Activated CD4-positive, alpha-beta memory T cell treated with anti-CD3 and anti-CD28 coated beads for 36 hours (primary cell): ENCODE measurements at regions of chr1 and their contacts with region 1.

Region 1: DNA sequence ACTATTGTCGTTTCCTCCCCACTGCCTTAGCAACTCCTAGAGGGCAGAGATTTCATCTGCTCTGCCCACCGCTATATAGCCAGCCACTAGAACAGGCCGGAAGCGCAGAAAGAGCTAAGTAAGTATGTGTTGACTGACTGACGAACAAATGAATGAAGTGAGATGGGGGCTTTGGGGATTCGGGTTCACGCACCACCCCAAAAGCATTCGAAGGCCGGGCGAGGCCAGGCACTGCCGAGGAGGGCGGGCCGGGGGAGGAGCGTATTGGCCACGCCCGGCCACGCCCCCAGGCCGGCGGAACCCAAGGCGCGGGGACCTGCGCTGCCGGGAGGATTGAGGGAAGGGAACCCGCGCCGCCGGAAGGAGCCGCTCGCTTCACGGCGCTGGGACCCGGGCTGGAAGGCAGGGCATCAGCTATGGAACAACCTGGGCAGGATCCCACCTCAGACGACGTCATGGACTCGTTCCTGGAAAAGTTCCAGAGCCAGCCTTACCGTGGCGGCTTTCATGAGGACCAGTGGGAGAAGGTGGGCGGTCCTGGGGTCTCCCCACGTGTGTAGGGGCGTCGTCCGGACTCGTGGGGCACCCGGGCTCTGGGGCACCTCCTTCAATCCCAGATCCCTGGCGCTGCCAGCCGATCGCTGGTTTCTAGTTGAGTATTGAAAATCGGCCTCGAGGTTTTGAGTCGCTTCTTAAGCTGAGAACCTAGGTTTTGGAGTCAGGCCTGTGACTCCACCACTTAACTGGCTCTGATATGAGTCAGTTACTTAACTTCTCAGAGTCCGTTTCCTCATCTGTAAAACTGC is at the start of gene TTC4:
- DNase-seq: peak; percentile 87
- H3K4me3 Mint-ChIP-seq: peak within 1 kb of the TSS; percentile 82
- H3K27ac Mint-ChIP-seq: peak within 1 kb of the TSS; percentile 92
- H3K4me1 Mint-ChIP-seq: peaks cover 30% of the 10 kb centered on the region
- H3K27me3 Mint-ChIP-seq: no peaks in the 10 kb centered on the region
- total RNA-seq, gene TTC4: 32.7 to 33.5 TPM

Region 2: GRCh38 chr1:54229281-54229891 is 486.3 kb before region 1 on chr1:
- CTCF ChIA-PET with region 1: no interaction called
- POLR2A ChIA-PET with region 1: no interaction called
- intact Hi-C with region 1: loop called (anchors 5 kb)
- DNase-seq: peak; percentile 62
- H3K4me3 Mint-ChIP-seq: no peak overlapping the region
- H3K27ac Mint-ChIP-seq: peak overlapping the region; percentile 11
- H3K4me1 Mint-ChIP-seq: peaks cover 39% of the 10 kb centered on the region
- H3K27me3 Mint-ChIP-seq: no peaks in the 10 kb centered on the region

Region 3: GRCh38 chr1:54421101-54421504 is 294.6 kb before region 1 on chr1:
- CTCF ChIA-PET with region 1: no interaction called
- POLR2A ChIA-PET with region 1: no interaction called
- intact Hi-C with region 1: no loop called
- DNase-seq: no peak
- H3K4me3 Mint-ChIP-seq: no peak overlapping the region
- H3K27ac Mint-ChIP-seq: no peak overlapping the region
- H3K4me1 Mint-ChIP-seq: no peaks in the 10 kb centered on the region
- H3K27me3 Mint-ChIP-seq: no peaks in the 10 kb centered on the region

Region 4: GRCh38 chr1:54542120-54542961 is 173.4 kb before region 1 on chr1:
- CTCF ChIA-PET with region 1: no interaction called
- POLR2A ChIA-PET with region 1: no interaction called
- intact Hi-C with region 1: loop called (anchors 5 kb)
- DNase-seq: peak; percentile 76
- H3K4me3 Mint-ChIP-seq: peak overlapping the region; percentile 70
- H3K27ac Mint-ChIP-seq: no peak overlapping the region
- H3K4me1 Mint-ChIP-seq: peaks cover 15% of the 10 kb centered on the region
- H3K27me3 Mint-ChIP-seq: peaks cover 2% of the 10 kb centered on the region

Region 5: GRCh38 chr1:54685335-54685905 is 30.3 kb before region 1 on chr1:
- CTCF ChIA-PET with region 1: no interaction called
- POLR2A ChIA-PET with region 1: no interaction called
- intact Hi-C with region 1: no loop called
- DNase-seq: no peak
- H3K4me3 Mint-ChIP-seq: no peak overlapping the region
- H3K27ac Mint-ChIP-seq: no peak overlapping the region
- H3K4me1 Mint-ChIP-seq: no peaks in the 10 kb centered on the region
- H3K27me3 Mint-ChIP-seq: no peaks in the 10 kb centered on the region

Region 6: GRCh38 chr1:54764133-54764921 is 48.6 kb after region 1 on chr1 and contains the start of gene PARS2:
- CTCF ChIA-PET with region 1: interaction called, 4 read pairs
- POLR2A ChIA-PET with region 1: interaction called, 7 read pairs
- intact Hi-C with region 1: loop called (anchors 1 kb)
- DNase-seq: peak; percentile 97
- H3K4me3 Mint-ChIP-seq: peak within 1 kb of the TSS; percentile 93
- H3K27ac Mint-ChIP-seq: peak within 1 kb of the TSS; percentile 78
- H3K4me1 Mint-ChIP-seq: peaks cover 12% of the 10 kb centered on the region
- H3K27me3 Mint-ChIP-seq: no peaks in the 10 kb centered on the region
- total RNA-seq, gene PARS2: 5.6 to 5.7 TPM

Region 7: GRCh38 chr1:54800899-54801759 is 85.4 kb after region 1 on chr1 and contains the start of gene TTC22:
- CTCF ChIA-PET with region 1: interaction called, 18 read pairs
- POLR2A ChIA-PET with region 1: interaction called, 23 read pairs
- intact Hi-C with region 1: loop called (anchors 1 kb)
- DNase-seq: peak; percentile 86
- H3K4me3 Mint-ChIP-seq: peak within 1 kb of the TSS; percentile 84
- H3K27ac Mint-ChIP-seq: peak within 1 kb of the TSS; percentile 67
- H3K4me1 Mint-ChIP-seq: peaks cover 56% of the 10 kb centered on the region
- H3K27me3 Mint-ChIP-seq: no peaks in the 10 kb centered on the region
- total RNA-seq, gene TTC22: 4.6 to 5.3 TPM